Activated CD4-positive, alpha-beta T cell treated with anti-CD3 and anti-CD28 coated beads, Interleukin-2, amount 10 ng/mL, durations not matched to agents 7 days and 5 days (primary cell): ENCODE measurements at regions of chr4 and their contacts with region 1.

Region 1: GRCh38 chr4:142556048-142556447 is 290.1 kb downstream of the INPP4B start:
- DNase-seq: no peak
- H3K4me3 Mint-ChIP-seq: no peak overlapping the region
- H3K27ac Mint-ChIP-seq: peak overlapping the region; percentile 73
- H3K4me1 Mint-ChIP-seq: peaks cover 74% of the 10 kb centered on the region
- H3K27me3 Mint-ChIP-seq: no peaks in the 10 kb centered on the region

Region 2: GRCh38 chr4:142443469-142443868 is 112.6 kb before region 1 on chr4:
- CTCF ChIA-PET with region 1: no interaction called
- POLR2A ChIA-PET with region 1: no interaction called
- DNase-seq: no peak
- H3K4me3 Mint-ChIP-seq: no peak overlapping the region
- H3K27ac Mint-ChIP-seq: no peak overlapping the region
- H3K4me1 Mint-ChIP-seq: peaks cover 10% of the 10 kb centered on the region
- H3K27me3 Mint-ChIP-seq: no peaks in the 10 kb centered on the region

Region 3: GRCh38 chr4:142567199-142567598 is 11.2 kb after region 1 on chr4:
- CTCF ChIA-PET with region 1: interaction called, 11 read pairs
- POLR2A ChIA-PET with region 1: no interaction called
- DNase-seq: peak; percentile 70
- H3K4me3 Mint-ChIP-seq: peak overlapping the region; percentile 84
- H3K27ac Mint-ChIP-seq: peak overlapping the region; percentile 94
- H3K4me1 Mint-ChIP-seq: peaks cover 66% of the 10 kb centered on the region
- H3K27me3 Mint-ChIP-seq: no peaks in the 10 kb centered on the region

Region 4: DNA sequence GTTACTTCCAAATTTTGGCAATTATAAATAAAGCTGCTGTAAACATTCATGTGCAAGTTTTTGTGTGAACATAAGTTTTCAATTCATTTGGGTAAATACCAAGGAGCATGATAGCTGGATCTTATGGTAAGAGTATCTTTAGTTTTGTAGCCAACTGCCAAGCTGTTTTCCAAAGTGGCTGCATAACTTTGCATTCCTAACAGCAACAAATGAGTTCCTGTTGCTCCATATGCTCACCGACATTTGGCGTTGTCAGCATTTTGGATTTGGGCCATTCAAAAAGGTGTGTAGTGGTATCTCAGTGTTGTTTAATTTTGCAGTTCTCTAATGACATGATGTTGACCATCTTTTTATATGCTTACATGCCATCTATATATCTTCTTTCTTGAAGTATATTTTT is 81.6 kb after region 1 on chr4:
- CTCF ChIA-PET with region 1: no interaction called
- POLR2A ChIA-PET with region 1: no interaction called
- DNase-seq: no peak
- H3K4me3 Mint-ChIP-seq: no peak overlapping the region
- H3K27ac Mint-ChIP-seq: no peak overlapping the region
- H3K4me1 Mint-ChIP-seq: no peaks in the 10 kb centered on the region
- H3K27me3 Mint-ChIP-seq: no peaks in the 10 kb centered on the region